Prostate gland (tissue), 2 donors: ENCODE measurements at regions of chr13 and their contacts with region 1.

Region 1: GRCh38 chr13:48594096-48594815 is 59.5 kb upstream of the CYSLTR2 start:
- DNase-seq: no peak
- H3K4me3 ChIP-seq: no peak overlapping the region
- H3K27ac ChIP-seq: no peak overlapping the region
- H3K4me1 ChIP-seq: no peaks in the 10 kb centered on the region
- H3K27me3 ChIP-seq: no peaks in the 10 kb centered on the region
- CTCF ChIP-seq: no peak
- POLR2A ChIP-seq: no peak

Region 2: GRCh38 chr13:48448959-48449614 is 145.2 kb before region 1 on chr13:
- intact Hi-C with region 1: no loop called
- DNase-seq: no peak
- H3K4me3 ChIP-seq: no peak overlapping the region
- H3K27ac ChIP-seq: peak overlapping the region; percentile 7 to 45
- H3K4me1 ChIP-seq: no peaks in the 10 kb centered on the region
- H3K27me3 ChIP-seq: no peaks in the 10 kb centered on the region
- CTCF ChIP-seq: no peak
- POLR2A ChIP-seq: no peak

Region 3: DNA sequence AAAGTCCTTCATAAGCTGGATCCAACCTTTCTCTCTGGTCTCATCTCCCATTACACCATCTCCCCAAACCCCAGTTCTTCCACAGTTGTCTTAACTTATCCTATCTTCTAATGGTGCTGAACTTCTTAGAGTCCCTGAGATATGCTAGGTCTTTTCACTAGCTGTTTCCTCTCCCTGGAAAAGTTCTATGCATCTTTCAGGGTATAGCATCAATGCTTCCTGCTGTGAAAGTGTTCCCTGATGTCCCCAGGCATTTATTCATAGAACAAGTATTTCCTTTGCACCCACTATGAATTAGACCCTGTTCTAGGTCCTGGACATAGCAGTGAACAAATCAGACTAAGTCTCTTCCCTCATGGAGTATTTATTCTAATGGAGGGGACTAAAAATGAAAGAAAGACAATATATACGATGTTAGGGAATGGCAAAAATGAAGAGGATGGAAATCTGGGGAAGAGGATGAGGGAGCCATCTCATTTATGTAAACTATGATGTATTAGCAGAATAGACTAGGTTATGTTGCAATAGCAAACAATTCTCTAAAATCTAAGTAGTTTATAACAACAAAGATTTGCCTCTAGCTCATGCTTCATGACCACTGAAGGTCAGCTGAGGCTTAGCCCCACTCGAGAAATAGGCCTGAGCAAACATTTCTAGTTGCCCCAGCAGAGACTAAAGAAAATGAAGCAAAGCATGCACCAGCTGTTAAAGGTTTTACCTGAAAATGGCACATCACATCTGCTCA is 179.4 kb after region 1 on chr13:
- intact Hi-C with region 1: loop called (anchors 5 kb)
- DNase-seq: no peak
- H3K4me3 ChIP-seq: no peak overlapping the region
- H3K27ac ChIP-seq: no peak overlapping the region
- H3K4me1 ChIP-seq: no peaks in the 10 kb centered on the region
- H3K27me3 ChIP-seq: no peaks in the 10 kb centered on the region
- CTCF ChIP-seq: no peak
- POLR2A ChIP-seq: no peak